Left cardiac atrium (tissue), 4 donors: ENCODE measurements at regions of chr15 and their contacts with region 1.

Region 1: DNA sequence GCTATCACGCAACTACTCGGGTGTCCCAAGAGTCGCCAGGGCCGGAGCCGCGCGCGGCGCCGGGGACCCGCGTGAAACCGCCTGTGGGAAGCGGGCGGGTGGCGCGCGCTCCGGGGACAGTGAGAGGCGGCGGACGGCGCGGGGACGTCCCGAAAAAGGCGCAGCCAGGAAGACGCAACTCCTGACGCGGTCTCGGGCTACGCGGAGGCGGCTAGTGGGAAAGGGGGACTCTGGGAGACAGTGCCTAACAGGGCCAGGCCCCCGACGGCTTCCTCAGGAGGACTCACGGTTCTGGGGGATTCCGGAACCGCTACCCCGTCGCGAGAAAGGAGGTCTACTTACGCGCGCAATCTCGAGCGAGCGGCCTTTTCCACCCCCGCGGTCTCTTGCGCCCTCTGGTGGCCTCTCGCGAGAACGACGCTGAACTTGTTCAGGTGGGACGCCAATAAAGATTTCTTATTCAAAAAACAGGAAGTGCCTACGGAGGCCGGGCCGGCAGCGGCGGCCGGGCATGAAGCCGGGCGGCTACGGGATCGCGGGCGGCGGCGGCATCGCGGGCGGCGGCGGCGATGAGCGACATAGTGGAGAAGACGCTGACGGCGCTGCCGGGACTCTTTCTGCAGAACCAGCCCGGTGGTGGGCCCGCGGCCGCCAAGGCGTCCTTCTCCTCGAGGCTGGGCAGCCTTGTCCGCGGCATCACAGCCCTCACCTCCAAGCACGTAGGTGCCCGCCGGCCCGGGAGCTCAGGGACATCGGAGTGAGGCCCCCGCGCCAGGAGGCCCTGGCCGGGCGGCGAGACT is at the start of gene AP4E1:
- DNase-seq: peak; percentile 90
- ATAC-seq: peak; percentile 86
- total RNA-seq, gene AP4E1: 6.3 to 9.9 TPM

Region 2: DNA sequence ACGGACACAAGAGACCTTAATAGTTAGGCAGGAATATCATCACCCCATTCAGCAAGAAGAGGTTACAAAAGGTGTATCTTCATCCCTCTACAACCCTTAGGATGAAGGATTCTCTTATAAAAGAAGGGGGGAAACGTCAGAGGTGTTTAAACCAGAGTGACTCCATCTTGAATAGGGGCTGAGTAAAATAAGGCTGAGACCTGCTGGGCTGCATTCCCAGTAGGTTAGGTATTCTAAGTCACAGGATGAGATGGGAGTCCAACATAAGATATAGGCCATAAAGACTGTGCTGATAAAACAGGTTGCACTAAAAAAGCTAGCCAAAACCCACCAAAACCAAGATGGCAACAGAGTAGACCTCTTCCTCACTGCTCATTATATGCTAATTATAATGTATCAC is 238.3 kb before region 1 on chr15:
- intact Hi-C with region 1: loop called in 1 of 2 experiments (anchors 10 kb)
- DNase-seq: no peak
- ATAC-seq: no peak

Region 3: GRCh38 chr15:50744601-50745000 is 163.8 kb before region 1 on chr15:
- intact Hi-C with region 1: no loop called
- DNase-seq: no peak
- ATAC-seq: no peak

Region 4: DNA sequence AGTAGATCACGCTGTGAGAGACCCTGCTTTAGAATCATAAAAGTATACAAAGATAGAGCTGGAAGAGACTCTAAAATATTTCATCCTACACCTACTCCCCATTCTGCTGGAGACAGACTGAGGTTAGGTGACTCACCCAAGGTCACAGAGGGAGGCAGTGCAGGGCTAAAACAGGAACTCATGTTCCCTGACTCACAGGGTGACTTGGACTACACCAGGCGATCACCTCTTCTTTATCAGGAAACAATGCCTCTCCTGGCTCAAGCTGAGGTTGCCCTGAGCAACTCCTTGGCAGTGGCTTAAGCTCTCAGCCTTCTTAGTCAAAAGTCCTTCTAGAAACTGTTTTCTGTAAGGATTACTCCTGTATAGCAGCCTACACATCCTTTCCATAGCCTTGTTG is 212.7 kb after region 1 on chr15:
- intact Hi-C with region 1: no loop called
- DNase-seq: peak; percentile 46
- ATAC-seq: peak; percentile 34 to 100